BJ (cell line): ENCODE measurements at regions of chr17 and their contacts with region 1.

Region 1: DNA sequence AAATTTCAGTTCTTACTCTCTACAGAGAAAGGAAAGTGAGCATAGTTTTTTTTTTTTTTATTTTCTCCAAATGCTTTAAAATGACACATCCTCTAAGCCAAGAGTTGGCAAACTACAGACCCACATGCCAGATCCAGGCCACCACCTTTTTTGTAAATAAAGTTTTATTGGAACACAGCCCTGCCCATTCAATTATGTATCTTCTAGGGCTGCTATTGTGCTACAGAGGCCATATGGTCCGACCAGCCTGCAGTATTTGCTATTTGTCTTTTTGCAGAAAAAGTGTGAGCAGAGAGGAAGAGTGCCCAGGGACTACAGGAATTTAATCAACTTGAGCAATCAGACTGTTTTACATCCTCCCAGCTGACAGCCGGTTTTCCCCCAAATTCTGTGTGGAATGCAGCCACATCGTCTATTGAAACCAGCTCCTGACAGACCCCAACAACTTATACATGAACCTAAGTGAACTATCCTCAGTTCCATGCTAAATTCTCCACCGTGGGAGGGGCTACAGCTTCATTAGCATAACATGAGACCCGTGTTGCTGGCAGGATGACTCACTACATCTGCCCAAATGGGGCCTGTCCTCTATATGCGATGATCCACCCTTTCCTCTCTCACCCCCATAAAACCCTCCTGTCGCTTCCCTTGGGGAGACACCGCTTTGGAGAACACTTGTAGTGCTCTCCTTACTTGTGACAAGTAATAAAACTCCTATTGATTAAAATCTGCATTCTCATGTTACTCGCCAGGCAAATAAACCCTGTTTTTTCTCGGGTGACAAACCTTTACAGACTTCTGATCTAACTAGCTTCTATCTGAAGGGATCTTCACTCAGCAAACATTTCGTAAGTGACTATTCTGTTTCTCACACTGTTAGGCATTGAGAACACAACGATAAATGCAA is 149.3 kb upstream of the HS3ST3A1 start:
- DNase-seq: no peak
- H3K4me3 ChIP-seq: no peak overlapping the region
- H3K27me3 ChIP-seq: no peaks in the 10 kb centered on the region
- CTCF ChIP-seq: no peak

Region 2: GRCh38 chr17:13490906-13491482 is 260.1 kb before region 1 on chr17:
- CTCF ChIA-PET with region 1: no interaction called
- POLR2A ChIA-PET with region 1: no interaction called
- DNase-seq: no peak
- H3K4me3 ChIP-seq: no peak overlapping the region
- H3K27me3 ChIP-seq: no peaks in the 10 kb centered on the region
- CTCF ChIP-seq: no peak

Region 3: GRCh38 chr17:13704333-13704732 is 46.7 kb before region 1 on chr17:
- CTCF ChIA-PET with region 1: no interaction called
- POLR2A ChIA-PET with region 1: interaction called, 17 read pairs
- DNase-seq: peak; percentile 26
- H3K4me3 ChIP-seq: no peak overlapping the region
- H3K27me3 ChIP-seq: no peaks in the 10 kb centered on the region
- CTCF ChIP-seq: no peak